SK-N-SH (cell line): ENCODE measurements at regions of chr19 and their contacts with region 1.

Region 1: DNA sequence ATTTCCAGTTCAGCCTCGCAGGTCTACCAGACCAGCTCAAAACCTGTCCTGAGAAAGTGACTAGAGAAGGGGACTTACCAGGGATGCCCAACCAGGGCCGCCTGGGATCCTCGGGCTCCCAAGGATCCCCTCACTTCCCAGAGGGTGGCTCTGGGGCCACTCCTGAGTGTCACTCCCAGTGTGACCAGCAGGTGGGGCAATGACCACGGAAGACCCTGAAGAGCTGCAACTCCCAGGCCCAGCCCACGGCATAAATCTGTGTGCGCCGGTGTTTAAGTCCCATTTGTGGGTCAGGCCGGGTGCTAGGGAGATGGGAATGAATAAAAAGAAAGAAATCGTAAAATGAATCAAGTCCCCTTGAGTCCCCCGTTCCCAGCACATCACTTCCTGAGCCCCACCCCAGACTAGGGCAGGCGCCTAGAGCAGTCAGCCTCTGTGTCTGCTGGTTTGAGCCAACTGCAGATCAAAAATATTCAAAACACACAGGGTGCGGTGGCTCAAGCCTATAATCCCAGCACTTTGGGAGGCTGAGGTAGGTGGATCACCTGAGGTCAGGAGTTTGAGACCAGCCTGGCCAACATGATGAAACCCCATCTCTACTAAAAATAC is 10.7 kb downstream of the PTGIR start:
- DNase-seq: peak; percentile 91
- H3K4me3 ChIP-seq: peak overlapping the region in 1 of 2 experiments; percentile 8; a peak in 1 of 4 replicates
- H3K27ac ChIP-seq: peak overlapping the region in 1 of 2 experiments; percentile 31; a peak in 1 of 4 replicates
- H3K4me1 ChIP-seq: peaks cover 0 to 28% of the 10 kb centered on the region in 2 experiments; a peak in 2 of 4 replicates
- H3K27me3 ChIP-seq: no peaks in the 10 kb centered on the region
- CTCF ChIP-seq: peak; percentile 84
- EP300 ChIP-seq: no peak
- RAD21 ChIP-seq: peak; percentile 92

Region 2: GRCh38 chr19:46378268-46378667 is 235.9 kb before region 1 on chr19:
- CTCF ChIA-PET with region 1: no interaction called
- POLR2A ChIA-PET with region 1: no interaction called
- DNase-seq: no peak
- H3K4me3 ChIP-seq: no peak overlapping the region
- H3K27ac ChIP-seq: peak overlapping the region; percentile 18 to 79; a peak in 3 of 4 replicates
- H3K4me1 ChIP-seq: peaks cover 11 to 29% of the 10 kb centered on the region in 2 experiments
- H3K27me3 ChIP-seq: no peaks in the 10 kb centered on the region
- CTCF ChIP-seq: no peak
- EP300 ChIP-seq: 0 out of 4 replicates have a peak, but pooled peaks of 1 of the 2 experiments have one; percentile 23
- RAD21 ChIP-seq: no peak

Region 3: GRCh38 chr19:46495787-46496101 is 118.5 kb before region 1 on chr19 and contains the start of gene PNMA8B:
- CTCF ChIA-PET with region 1: no interaction called
- POLR2A ChIA-PET with region 1: no interaction called
- DNase-seq: peak; percentile 99
- H3K4me3 ChIP-seq: peak within 1 kb of the TSS; percentile 57 to 59
- H3K27ac ChIP-seq: peak within 1 kb of the TSS in 1 of 2 experiments; percentile 59; a peak in 1 of 4 replicates
- H3K4me1 ChIP-seq: peaks cover 0 to 16% of the 10 kb centered on the region in 2 experiments; a peak in 1 of 4 replicates
- H3K27me3 ChIP-seq: no peaks in the 10 kb centered on the region
- CTCF ChIP-seq: no peak
- EP300 ChIP-seq: no peak
- RAD21 ChIP-seq: no peak
- polyA plus RNA-seq, gene PNMA8B: 0.63 and 0.92 TPM in 2 replicates

Region 4: GRCh38 chr19:46634045-46634655 is 19.9 kb after region 1 on chr19:
- CTCF ChIA-PET with region 1: no interaction called
- POLR2A ChIA-PET with region 1: interaction called, 40 read pairs
- DNase-seq: peak; percentile 90
- H3K4me3 ChIP-seq: peak overlapping the region in 1 of 2 experiments; percentile 48; a peak in 2 of 4 replicates
- H3K27ac ChIP-seq: peak overlapping the region in 1 of 2 experiments; percentile 92; a peak in 2 of 4 replicates
- H3K4me1 ChIP-seq: peaks cover 16 to 56% of the 10 kb centered on the region in 2 experiments
- H3K27me3 ChIP-seq: no peaks in the 10 kb centered on the region
- CTCF ChIP-seq: no peak
- EP300 ChIP-seq: no peak
- RAD21 ChIP-seq: no peak

Region 5: GRCh38 chr19:46717034-46717723 is 103.0 kb after region 1 on chr19 and contains the start of gene PRKD2:
- CTCF ChIA-PET with region 1: interaction called, 15 read pairs
- POLR2A ChIA-PET with region 1: interaction called, 3 read pairs
- DNase-seq: peak; percentile 98
- H3K4me3 ChIP-seq: peak within 1 kb of the TSS; percentile 85 to 88
- H3K27ac ChIP-seq: peak within 1 kb of the TSS; percentile 79 to 91
- H3K4me1 ChIP-seq: peaks cover 0 to 19% of the 10 kb centered on the region in 2 experiments; a peak in 2 of 4 replicates
- H3K27me3 ChIP-seq: no peaks in the 10 kb centered on the region
- CTCF ChIP-seq: no peak
- EP300 ChIP-seq: no peak
- RAD21 ChIP-seq: no peak
- polyA plus RNA-seq, gene PRKD2: 14.1 and 21.4 TPM in 2 replicates

Region 6: DNA sequence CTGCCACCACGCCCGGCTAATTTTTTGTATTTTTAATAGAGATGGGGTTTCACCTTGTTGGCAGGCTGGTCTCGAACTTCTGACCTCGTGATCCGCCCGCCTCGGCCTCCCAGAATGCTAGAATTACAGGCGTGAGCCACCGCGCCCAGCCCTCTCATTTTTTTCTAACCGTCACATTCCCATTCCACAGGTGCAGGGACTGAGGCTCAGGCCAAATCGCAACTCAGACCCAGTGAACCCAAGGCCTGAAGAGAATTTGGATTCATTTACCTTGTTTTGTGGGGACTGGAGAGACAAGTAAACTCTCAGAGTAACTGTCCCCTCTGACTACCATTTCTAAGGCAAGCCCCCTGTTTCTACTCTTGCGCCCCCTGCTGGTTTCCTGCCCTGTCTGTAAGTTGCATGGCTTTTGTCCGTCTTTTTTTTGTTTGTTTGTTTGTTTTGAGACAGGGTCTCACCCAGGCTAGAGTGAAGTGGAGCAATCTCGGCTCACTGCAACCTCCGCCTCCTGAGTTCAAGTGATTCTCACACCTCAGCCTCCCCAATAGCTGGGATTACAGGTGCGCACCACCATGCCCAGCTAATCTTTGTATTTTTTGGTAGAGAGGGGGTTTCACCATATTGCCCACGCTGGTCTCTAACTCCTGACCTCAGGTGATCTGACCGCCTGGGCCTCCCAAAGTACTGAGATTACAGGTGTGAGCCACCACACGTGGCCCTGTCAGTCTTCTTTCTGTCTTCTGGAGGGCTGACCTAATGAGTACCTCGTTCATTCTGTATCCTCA is 134.3 kb after region 1 on chr19:
- CTCF ChIA-PET with region 1: interaction called, 12 read pairs
- POLR2A ChIA-PET with region 1: no interaction called
- DNase-seq: peak; percentile 75
- H3K4me3 ChIP-seq: no peak overlapping the region; a peak in 1 of 4 replicates
- H3K27ac ChIP-seq: no peak overlapping the region
- H3K4me1 ChIP-seq: peaks cover 0 to 17% of the 10 kb centered on the region in 2 experiments; a peak in 1 of 4 replicates
- H3K27me3 ChIP-seq: no peaks in the 10 kb centered on the region
- CTCF ChIP-seq: peak; percentile 89
- EP300 ChIP-seq: no peak
- RAD21 ChIP-seq: peak; percentile 30; the same call in 1 of the 2 replicates